Endothelial cell of umbilical vein (primary cell): ENCODE measurements at regions of chr5 and their contacts with region 1.

Region 1: DNA sequence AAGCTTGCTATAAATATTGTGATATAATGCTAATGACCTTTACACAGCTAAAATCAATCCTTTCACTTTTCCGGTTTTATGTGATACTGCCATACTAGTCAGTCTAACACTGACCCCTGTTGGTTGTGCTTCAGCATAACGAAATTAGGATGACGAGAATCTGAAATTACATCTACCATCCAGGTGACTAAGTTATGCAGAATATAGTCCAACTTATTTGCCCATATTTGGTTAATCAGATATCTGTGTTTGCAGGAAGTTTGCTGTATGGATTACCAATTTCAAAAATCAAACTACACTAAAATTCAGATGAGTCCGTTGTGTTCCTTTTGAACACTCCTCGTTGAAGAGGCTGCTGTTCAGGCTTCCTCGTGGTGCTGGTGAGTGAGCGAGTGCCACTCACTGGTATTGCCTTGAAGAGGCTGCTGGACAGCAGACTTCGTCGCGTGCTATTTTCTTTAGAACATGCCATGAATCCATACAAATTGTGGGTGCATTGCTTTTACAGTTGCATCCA is 32.5 kb downstream of the TENT4A start:
- DNase-seq: peak; percentile 70
- H3K4me3 ChIP-seq: no peak overlapping the region
- H3K27ac ChIP-seq: no peak overlapping the region
- H3K4me1 ChIP-seq: no peaks in the 10 kb centered on the region
- H3K27me3 ChIP-seq: no peaks in the 10 kb centered on the region
- CTCF ChIP-seq: peak; percentile 61 to 65
- POLR2A ChIP-seq: no peak

Region 2: DNA sequence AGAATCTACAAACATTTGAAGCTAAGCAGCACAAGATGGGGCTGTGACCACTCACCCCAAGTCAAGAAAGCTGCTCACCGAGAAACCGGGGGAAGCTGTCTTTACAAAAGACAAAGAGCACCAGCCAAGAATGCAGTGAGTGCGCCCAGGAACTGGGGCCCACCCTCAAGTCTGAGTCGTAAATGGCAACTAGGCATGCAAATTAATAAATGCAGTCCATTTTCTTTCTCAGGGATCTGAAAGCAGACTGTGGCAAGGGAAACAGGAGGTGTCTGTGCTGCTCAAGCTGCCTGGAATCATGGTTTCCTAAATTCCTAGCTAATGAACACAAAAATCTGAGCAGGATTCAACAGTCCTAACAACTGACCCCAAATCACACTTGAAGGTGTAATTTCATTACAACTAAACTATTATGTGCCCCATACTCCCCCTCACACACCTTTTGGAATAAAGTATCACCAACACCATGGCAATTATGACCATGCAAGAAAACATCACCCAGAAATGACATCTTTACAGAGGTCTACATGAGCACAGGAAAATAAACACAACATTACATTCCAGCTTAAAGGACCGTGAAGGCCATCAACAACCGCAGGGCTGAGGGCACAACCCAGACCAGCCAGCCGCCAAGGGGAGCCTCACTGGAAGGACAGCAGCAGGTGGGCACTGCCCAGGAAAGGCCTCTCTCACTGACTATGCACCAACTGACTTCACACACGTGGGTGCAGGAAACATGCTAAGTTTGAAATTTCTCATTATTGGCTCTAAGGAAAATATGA is 130.5 kb before region 1 on chr5:
- CTCF ChIA-PET with region 1: interaction called, 15 read pairs
- POLR2A ChIA-PET with region 1: no interaction called
- dilution Hi-C with region 1: no loop called
- intact Hi-C with region 1: no loop called
- DNase-seq: no peak
- H3K4me3 ChIP-seq: no peak overlapping the region
- H3K27ac ChIP-seq: no peak overlapping the region
- H3K4me1 ChIP-seq: no peaks in the 10 kb centered on the region
- H3K27me3 ChIP-seq: no peaks in the 10 kb centered on the region
- CTCF ChIP-seq: no peak
- POLR2A ChIP-seq: no peak

Region 3: GRCh38 chr5:6623941-6624340 is 121.8 kb before region 1 on chr5:
- CTCF ChIA-PET with region 1: interaction called, 18 read pairs
- POLR2A ChIA-PET with region 1: no interaction called
- dilution Hi-C with region 1: loop called (anchors 25 kb)
- intact Hi-C with region 1: no loop called
- DNase-seq: no peak
- H3K4me3 ChIP-seq: no peak overlapping the region
- H3K27ac ChIP-seq: no peak overlapping the region
- H3K4me1 ChIP-seq: no peaks in the 10 kb centered on the region
- H3K27me3 ChIP-seq: no peaks in the 10 kb centered on the region
- CTCF ChIP-seq: no peak
- POLR2A ChIP-seq: no peak

Region 4: GRCh38 chr5:6675763-6676499 is 69.8 kb before region 1 on chr5:
- CTCF ChIA-PET with region 1: no interaction called
- POLR2A ChIA-PET with region 1: no interaction called
- dilution Hi-C with region 1: no loop called
- intact Hi-C with region 1: no loop called
- DNase-seq: no peak
- H3K4me3 ChIP-seq: no peak overlapping the region
- H3K27ac ChIP-seq: no peak overlapping the region
- H3K4me1 ChIP-seq: no peaks in the 10 kb centered on the region
- H3K27me3 ChIP-seq: no peaks in the 10 kb centered on the region
- CTCF ChIP-seq: no peak
- POLR2A ChIP-seq: no peak

Region 5: DNA sequence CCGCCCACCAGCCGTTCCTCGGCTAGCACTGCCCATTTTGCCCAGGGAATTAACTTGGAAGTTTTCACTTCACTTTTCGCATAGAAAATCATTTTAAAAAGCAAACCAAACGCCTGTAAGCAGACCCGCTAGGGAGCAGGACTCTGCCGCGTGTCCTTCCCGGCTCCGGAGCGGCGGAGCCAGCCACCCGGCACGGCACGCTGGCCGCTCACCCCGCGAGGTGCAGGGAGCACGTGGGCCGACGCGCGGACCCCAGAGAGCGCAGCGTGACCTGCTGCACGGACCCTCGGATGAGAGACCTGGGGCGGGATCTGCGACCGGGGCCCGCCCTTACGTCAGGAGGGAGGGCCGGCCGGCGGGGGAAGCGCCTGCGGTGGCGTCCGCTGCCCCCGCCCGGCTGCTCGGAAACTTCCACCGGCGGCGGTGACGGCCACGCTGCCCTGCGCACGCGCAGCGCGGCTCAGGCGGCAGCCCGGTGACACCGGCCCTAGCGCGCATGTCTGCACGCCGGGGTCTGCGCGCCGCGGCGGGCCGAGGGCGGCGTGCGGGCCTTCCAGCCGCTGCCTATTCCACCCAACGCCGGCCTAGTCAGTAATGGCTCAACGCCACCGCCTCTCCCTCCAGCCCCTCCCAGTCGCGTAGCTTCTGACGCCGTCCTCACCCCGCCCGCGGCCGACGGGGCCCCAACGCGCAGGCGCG is 33.0 kb before region 1 on chr5:
- CTCF ChIA-PET with region 1: interaction called, 14 read pairs
- POLR2A ChIA-PET with region 1: no interaction called
- dilution Hi-C with region 1: no loop called
- intact Hi-C with region 1: loop called (anchors 1 kb)
- DNase-seq: peak; percentile 98
- H3K4me3 ChIP-seq: peak overlapping the region; percentile 44 to 74 (median 65)
- H3K27ac ChIP-seq: peak overlapping the region; percentile 65
- H3K4me1 ChIP-seq: peaks cover 25% of the 10 kb centered on the region
- H3K27me3 ChIP-seq: no peaks in the 10 kb centered on the region
- CTCF ChIP-seq: no peak
- POLR2A ChIP-seq: peak; percentile 83

Region 6: DNA sequence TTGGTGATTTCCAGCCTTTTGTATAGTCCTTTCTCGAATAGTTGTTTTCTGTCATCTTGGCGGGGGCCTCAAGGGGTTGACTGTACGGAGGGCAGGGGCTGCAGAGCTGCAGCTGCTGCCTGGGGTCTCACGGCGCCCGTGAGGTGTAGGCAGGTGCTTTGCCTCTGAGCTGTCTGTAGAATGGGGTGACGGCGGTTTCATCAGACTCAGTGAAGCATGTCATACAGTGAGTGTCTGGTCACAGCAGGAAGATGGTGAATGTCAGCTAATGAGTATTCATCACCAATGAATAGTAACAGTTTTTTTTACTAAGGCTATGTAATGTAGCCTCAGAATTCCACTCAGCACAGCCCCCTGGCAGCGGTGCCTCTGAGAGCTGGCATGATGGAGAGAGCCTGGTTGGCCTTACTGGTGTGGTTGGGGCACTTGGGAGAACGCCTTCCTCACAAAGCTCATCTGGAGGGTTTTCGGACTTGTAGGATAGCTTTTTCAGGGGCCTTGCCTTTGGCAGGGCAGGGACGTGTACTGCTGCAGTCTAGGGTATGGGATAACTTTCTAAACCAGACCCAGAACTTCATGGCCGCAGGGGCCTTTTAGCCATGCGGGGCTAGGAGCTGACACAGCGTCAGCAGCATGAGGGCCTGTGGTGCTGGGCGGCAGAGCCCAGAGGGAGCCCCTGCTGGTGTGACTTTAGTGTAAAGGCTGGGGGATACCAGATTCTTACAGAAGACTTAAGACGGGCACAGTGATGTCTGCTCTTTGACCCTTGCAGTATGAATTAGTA is 17.6 kb before region 1 on chr5:
- CTCF ChIA-PET with region 1: interaction called, 29 read pairs
- POLR2A ChIA-PET with region 1: no interaction called
- dilution Hi-C with region 1: no loop called
- intact Hi-C with region 1: no loop called
- DNase-seq: no peak
- H3K4me3 ChIP-seq: no peak overlapping the region
- H3K27ac ChIP-seq: no peak overlapping the region
- H3K4me1 ChIP-seq: peaks cover 28% of the 10 kb centered on the region
- H3K27me3 ChIP-seq: no peaks in the 10 kb centered on the region
- CTCF ChIP-seq: no peak
- POLR2A ChIP-seq: no peak